Left cardiac atrium (tissue), 4 donors: ENCODE measurements at regions of chr6 and their contacts with region 1.

Region 1: DNA sequence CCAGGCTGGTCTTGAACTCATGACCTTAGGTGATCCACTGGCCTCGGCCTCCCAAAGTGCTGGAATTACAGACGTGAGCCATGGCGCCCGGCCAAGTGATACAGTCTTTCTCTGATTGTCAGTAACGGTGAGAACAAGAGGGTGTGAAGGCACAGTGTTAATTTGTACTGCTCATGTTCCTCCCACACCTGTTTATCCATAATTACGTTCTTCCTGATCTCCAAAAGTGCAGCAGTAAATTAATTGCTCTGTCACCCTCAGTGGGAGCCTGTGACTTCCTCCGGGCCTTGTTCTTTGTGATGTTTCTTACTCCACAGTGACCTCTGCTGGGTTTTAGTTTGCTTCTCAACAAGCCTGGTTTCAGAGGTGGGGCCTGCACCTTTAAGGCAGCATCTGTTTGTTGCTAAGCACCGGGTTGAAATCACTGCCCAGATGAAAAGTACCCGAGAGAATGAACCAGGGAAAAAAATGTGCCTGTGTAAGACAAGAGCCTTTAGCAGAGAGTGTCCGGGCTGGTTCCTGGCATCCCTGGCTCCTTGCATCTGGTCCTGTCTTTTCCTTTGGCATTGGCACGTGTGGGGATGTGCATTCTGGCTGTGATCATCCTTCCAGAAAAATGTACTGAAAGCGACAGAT is 89.1 kb upstream of the CLDN20 start:
- DNase-seq: peak; percentile 69
- ATAC-seq: peak; percentile 79 to 87

Region 2: GRCh38 chr6:154675602-154676088 is 499.0 kb before region 1 on chr6:
- intact Hi-C with region 1: loop called in 1 of 2 experiments (anchors 5 kb)
- DNase-seq: peak; percentile 84
- ATAC-seq: peak; percentile 98

Region 3: DNA sequence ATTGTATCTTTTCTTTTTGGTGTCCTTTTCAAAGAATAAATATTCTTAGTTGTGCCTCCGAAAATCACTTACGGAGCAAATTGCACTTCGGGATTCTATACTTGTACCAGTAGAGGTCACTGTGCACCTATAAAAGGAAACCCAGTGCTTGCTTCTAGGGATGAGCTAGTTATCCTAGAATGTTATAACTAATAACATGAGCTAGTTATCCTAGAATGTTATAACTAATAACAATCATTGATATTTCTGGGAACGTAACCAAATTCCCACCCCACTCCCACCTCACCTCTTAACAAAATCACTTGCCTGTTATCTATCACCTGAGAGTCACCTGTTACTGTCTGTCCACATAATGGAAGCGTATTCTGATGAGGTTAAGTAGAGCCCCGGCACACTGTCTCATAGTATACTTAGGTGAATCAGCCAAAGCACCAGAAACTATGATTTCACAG is 306.5 kb before region 1 on chr6:
- intact Hi-C with region 1: loop called (anchors 2 to 10 kb)
- DNase-seq: no peak
- ATAC-seq: peak in 1 of 2 donors; percentile 54

Region 4: GRCh38 chr6:154928325-154928922 is 246.3 kb before region 1 on chr6:
- intact Hi-C with region 1: loop called (anchors 1 to 10 kb)
- DNase-seq: peak; percentile 54
- ATAC-seq: peak; percentile 58 to 86

Region 5: GRCh38 chr6:155248008-155249001 is 73.6 kb after region 1 on chr6:
- intact Hi-C with region 1: loop called in 1 of 2 experiments (anchors 5 kb)
- DNase-seq: peak; percentile 40
- ATAC-seq: peak; percentile 79 to 82

Region 6: GRCh38 chr6:155301867-155302266 is 127.2 kb after region 1 on chr6:
- intact Hi-C with region 1: loop called in 1 of 2 experiments (anchors 5 kb)
- DNase-seq: no peak
- ATAC-seq: no peak

Region 7: GRCh38 chr6:155530219-155530834 is 355.6 kb after region 1 on chr6:
- intact Hi-C with region 1: loop called in 1 of 2 experiments (anchors 10 kb)
- DNase-seq: no peak
- ATAC-seq: no peak